ENCODE measurements at regions of chr18 and their contacts with region 1.

Region 1: DNA sequence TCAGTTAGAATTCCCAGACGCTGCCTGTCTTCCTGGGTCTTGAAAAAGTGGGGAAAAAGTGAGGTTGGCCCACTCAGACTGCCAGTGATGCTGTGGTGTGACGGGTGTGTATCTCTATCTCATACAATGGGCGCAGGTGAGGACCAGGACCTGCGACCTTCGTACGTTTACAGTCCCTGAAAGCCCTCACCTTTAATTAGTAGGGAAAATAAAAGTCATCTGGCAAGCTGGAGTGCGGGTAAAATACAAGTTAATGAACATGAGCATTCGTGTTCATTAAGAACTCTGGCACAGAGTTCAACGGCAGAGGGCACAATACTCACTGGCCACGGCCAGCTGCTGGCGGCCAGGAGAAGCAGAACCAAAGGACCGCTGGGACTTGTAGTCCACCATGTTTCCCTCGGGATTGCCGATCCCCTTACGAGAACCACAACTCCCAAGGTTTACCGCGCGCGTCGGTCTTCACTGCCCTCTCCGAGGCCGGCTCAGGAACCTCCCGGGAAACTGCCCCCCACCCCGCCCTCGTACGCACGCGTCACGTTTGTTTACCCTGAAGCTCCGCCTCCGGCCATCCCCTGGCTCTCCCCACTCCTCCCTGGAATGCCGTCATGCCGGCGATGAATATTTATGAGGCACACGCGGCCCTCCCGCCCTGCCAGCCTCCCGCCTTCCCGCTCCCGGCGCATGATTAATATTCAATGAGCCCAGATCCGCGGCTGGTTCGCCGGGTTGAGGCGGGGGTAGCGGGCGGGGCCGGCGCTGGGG is 488 bp upstream of the PHLPP1 start:
- DNase-seq: peak; percentile 88
- ATAC-seq: peak; percentile 79
- H3K4me3 Mint-ChIP-seq: peak overlapping the region; percentile 91
- H3K27ac Mint-ChIP-seq: peak overlapping the region; percentile 89
- H3K4me1 Mint-ChIP-seq: peaks cover 37% of the 10 kb centered on the region
- H3K27me3 Mint-ChIP-seq: no peaks in the 10 kb centered on the region
- CTCF ChIP-seq: no peak

Region 2: DNA sequence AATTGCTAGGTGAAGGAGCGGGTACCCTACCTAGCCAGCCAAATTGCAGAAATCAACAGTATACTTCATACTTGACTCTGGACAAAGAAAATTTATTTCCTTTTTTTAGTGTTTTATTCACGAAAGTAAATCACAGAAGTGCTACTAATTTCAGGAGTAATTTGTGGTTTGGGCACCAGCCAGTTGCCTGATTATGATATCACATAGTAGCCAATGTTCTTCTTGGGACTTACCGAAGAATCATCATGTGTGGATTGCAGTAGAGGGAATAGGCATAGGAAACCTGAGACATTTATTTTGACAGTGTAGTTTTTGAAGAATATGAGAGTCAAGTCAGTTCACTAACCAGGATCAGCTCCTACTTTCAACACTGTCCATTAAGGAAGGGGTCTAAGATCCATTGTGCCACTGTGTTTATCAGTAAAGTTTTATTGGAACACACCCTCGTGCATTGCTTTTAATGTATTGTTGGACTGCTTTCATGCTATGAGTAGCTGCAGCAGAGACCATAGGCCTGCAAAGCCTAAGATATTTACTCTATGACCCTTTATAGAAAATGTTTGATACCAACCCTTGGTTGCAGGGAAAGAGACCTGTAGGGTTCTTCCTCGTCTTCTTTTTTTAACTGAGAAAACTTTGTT is 357.7 kb before region 1 on chr18:
- CTCF ChIA-PET with region 1: no interaction called
- POLR2A ChIA-PET with region 1: no interaction called
- intact Hi-C with region 1: no loop called
- DNase-seq: no peak
- ATAC-seq: no peak
- H3K4me3 Mint-ChIP-seq: no peak overlapping the region
- H3K27ac Mint-ChIP-seq: no peak overlapping the region
- H3K4me1 Mint-ChIP-seq: no peaks in the 10 kb centered on the region
- H3K27me3 Mint-ChIP-seq: peaks cover 5% of the 10 kb centered on the region
- CTCF ChIP-seq: no peak

Region 3: GRCh38 chr18:62584241-62585120 is 130.4 kb before region 1 on chr18:
- CTCF ChIA-PET with region 1: interaction called, 3 read pairs
- POLR2A ChIA-PET with region 1: no interaction called
- intact Hi-C with region 1: loop called (anchors 2 kb)
- DNase-seq: peak; percentile 67
- ATAC-seq: peak; percentile 96
- H3K4me3 Mint-ChIP-seq: no peak overlapping the region
- H3K27ac Mint-ChIP-seq: no peak overlapping the region
- H3K4me1 Mint-ChIP-seq: peaks cover 26% of the 10 kb centered on the region
- H3K27me3 Mint-ChIP-seq: no peaks in the 10 kb centered on the region
- CTCF ChIP-seq: no peak

Region 4: DNA sequence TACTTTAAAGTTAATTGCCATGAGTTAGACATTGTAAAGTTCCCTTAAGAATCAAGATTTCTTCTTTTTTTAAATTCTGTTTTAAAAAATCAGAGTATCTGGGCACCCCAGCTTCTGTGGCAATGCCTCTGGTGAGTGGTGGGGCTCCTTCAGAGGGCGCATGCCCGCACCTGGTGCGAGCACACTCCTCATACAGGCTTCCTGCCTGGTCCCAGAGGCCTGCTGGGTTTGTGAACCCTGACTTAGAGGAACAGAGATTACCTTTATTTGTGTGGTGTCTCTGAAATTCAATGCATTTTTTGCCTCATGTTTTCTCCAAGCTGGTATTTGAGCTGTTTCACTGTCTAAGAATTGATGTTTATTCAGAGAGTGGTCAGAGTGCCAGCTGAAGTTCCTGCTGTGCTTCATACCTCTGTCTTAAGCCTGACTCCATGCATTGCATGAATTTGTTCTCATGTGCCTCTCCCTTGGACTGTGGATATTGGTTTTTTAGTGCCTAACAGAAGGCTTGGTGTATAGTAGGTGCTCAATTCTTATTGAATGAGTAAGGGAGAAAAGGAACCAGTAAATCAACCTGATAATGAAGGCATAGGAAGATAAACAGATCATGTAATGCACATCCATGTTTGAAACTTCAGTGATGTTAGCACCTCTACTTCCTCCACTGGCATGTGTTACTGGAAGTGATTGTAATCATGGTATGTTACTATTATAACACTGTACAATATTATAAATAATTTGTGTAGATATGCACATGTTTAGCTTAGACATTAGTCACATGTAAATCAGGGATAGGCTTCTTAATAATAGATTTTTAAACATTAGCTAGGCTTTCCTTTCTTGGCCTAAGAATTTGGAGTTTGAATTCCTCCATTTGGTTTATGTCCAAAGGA is 29.5 kb after region 1 on chr18:
- CTCF ChIA-PET with region 1: interaction called, 4 read pairs
- POLR2A ChIA-PET with region 1: interaction called, 5 read pairs
- intact Hi-C with region 1: loop called (anchors 2 kb)
- DNase-seq: peak; percentile 18
- ATAC-seq: peak; percentile 99
- H3K4me3 Mint-ChIP-seq: peak overlapping the region; percentile 36
- H3K27ac Mint-ChIP-seq: peak overlapping the region; percentile 78
- H3K4me1 Mint-ChIP-seq: peaks cover 36% of the 10 kb centered on the region
- H3K27me3 Mint-ChIP-seq: no peaks in the 10 kb centered on the region
- CTCF ChIP-seq: no peak

Region 5: GRCh38 chr18:62944454-62944853 is 229.6 kb after region 1 on chr18:
- CTCF ChIA-PET with region 1: interaction called, 9 read pairs
- POLR2A ChIA-PET with region 1: interaction called, 3 read pairs
- intact Hi-C with region 1: loop called (anchors 1 kb)
- DNase-seq: no peak
- ATAC-seq: peak; percentile 40
- H3K4me3 Mint-ChIP-seq: no peak overlapping the region
- H3K27ac Mint-ChIP-seq: no peak overlapping the region
- H3K4me1 Mint-ChIP-seq: peaks cover 5% of the 10 kb centered on the region
- H3K27me3 Mint-ChIP-seq: no peaks in the 10 kb centered on the region
- CTCF ChIP-seq: no peak

Region 6: GRCh38 chr18:63138436-63139340 is 423.8 kb after region 1 on chr18:
- CTCF ChIA-PET with region 1: no interaction called
- POLR2A ChIA-PET with region 1: no interaction called
- intact Hi-C with region 1: loop called (anchors 5 kb)
- DNase-seq: no peak
- ATAC-seq: peak; percentile 47
- H3K4me3 Mint-ChIP-seq: peak overlapping the region; percentile 82
- H3K27ac Mint-ChIP-seq: peak overlapping the region; percentile 90
- H3K4me1 Mint-ChIP-seq: peaks cover 86% of the 10 kb centered on the region
- H3K27me3 Mint-ChIP-seq: no peaks in the 10 kb centered on the region
- CTCF ChIP-seq: no peak

Region 7: GRCh38 chr18:63367053-63367953 is 652.5 kb after region 1 on chr18 and contains the start of gene KDSR:
- CTCF ChIA-PET with region 1: no interaction called
- POLR2A ChIA-PET with region 1: interaction called, 3 read pairs
- intact Hi-C with region 1: loop called (anchors 1 kb)
- DNase-seq: peak; percentile 88
- ATAC-seq: peak; percentile 92
- H3K4me3 Mint-ChIP-seq: peak within 1 kb of the TSS; percentile 88
- H3K27ac Mint-ChIP-seq: peak within 1 kb of the TSS; percentile 71
- H3K4me1 Mint-ChIP-seq: peaks cover 23% of the 10 kb centered on the region
- H3K27me3 Mint-ChIP-seq: no peaks in the 10 kb centered on the region
- CTCF ChIP-seq: no peak
- total RNA-seq, gene KDSR: 15.0 and 15.3 TPM in 2 replicates

Measured in activated B cell treated with CpG ODN at 0.5 μM for 24 hours (primary cell).